SK-N-SH (cell line): ENCODE measurements at regions of chr14 and their contacts with region 1.

Region 1: DNA sequence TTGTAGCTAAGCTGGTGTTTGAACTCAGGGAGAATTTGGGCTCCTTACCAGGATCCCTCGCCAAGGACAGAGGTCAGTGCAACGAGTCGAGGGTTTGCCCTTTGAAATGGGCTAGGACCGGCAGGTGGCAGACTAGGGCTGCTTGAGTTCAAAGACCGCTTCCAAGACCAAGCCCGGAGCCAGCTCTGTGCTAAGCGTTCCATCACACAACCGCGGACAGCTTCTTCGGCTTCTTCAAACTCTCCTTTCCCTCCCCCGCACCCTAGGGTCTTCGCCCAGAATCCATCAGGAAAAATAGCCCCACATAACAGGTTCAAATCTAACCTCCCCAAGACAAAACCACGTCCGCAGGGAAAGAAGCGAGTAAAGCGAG is 705 bp upstream of the FLVCR2 start:
- DNase-seq: peak; percentile 87
- H3K4me3 ChIP-seq: peak overlapping the region; percentile 57 to 82
- H3K27ac ChIP-seq: no peak overlapping the region
- H3K4me1 ChIP-seq: peaks cover 0 to 11% of the 10 kb centered on the region in 2 experiments; a peak in 1 of 4 replicates
- H3K27me3 ChIP-seq: peaks cover 35% of the 10 kb centered on the region
- CTCF ChIP-seq: peak; percentile 77
- EP300 ChIP-seq: no peak
- RAD21 ChIP-seq: peak; percentile 89

Region 2: GRCh38 chr14:75147423-75148071 is 430.2 kb before region 1 on chr14:
- CTCF ChIA-PET with region 1: no interaction called
- POLR2A ChIA-PET with region 1: no interaction called
- DNase-seq: no peak
- H3K4me3 ChIP-seq: no peak overlapping the region
- H3K27ac ChIP-seq: peak overlapping the region in 1 of 2 experiments; percentile 18; a peak in 1 of 4 replicates
- H3K4me1 ChIP-seq: no peaks in the 10 kb centered on the region; a peak in 1 of 4 replicates
- H3K27me3 ChIP-seq: no peaks in the 10 kb centered on the region
- CTCF ChIP-seq: no peak
- EP300 ChIP-seq: no peak
- RAD21 ChIP-seq: no peak

Region 3: GRCh38 chr14:75522224-75522982 is 55.3 kb before region 1 on chr14 and contains the start of gene BATF:
- CTCF ChIA-PET with region 1: interaction called, 13 read pairs
- POLR2A ChIA-PET with region 1: no interaction called
- DNase-seq: no peak
- H3K4me3 ChIP-seq: no peak within 1 kb of the TSS
- H3K27ac ChIP-seq: no peak within 1 kb of the TSS
- H3K4me1 ChIP-seq: no peaks in the 10 kb centered on the region
- H3K27me3 ChIP-seq: no peaks in the 10 kb centered on the region
- CTCF ChIP-seq: no peak
- EP300 ChIP-seq: no peak
- RAD21 ChIP-seq: no peak
- polyA plus RNA-seq, gene BATF: not detected in 2 replicates

Region 4: DNA sequence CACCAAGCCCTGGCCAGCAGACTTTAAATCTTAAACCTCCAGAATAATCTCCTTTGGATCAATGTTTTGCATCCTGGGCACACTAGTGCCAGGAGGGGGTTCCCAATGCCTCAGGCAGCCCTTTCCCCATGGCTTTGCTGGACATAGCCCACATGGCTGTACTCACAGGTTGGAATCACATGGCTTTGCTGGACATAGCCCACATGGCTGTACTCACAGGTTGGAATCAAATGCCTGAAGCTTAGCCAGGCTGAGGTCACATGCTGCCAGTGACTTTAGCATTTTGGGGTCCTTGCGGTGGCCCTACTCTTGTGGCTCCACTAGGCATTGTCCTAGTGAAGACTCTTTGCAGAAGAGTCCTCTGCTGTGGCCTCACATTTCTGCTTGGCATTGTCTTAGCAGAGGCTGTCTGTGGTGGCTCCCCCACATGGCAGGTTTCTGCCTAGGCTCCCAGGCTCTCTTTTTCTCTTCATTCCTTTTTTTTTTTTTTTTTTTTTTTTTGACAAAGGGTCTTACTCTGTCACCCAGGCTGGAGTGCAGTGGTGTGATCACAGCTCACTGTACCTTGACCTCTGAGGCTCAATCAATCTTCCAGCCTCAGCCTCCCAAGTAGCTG is 13.7 kb after region 1 on chr14:
- CTCF ChIA-PET with region 1: interaction called, 42 read pairs
- POLR2A ChIA-PET with region 1: no interaction called
- DNase-seq: no peak
- H3K4me3 ChIP-seq: no peak overlapping the region
- H3K27ac ChIP-seq: no peak overlapping the region
- H3K4me1 ChIP-seq: no peaks in the 10 kb centered on the region
- H3K27me3 ChIP-seq: no peaks in the 10 kb centered on the region; the same call in 1 of the 2 replicates
- CTCF ChIP-seq: no peak
- EP300 ChIP-seq: no peak
- RAD21 ChIP-seq: no peak

Region 5: DNA sequence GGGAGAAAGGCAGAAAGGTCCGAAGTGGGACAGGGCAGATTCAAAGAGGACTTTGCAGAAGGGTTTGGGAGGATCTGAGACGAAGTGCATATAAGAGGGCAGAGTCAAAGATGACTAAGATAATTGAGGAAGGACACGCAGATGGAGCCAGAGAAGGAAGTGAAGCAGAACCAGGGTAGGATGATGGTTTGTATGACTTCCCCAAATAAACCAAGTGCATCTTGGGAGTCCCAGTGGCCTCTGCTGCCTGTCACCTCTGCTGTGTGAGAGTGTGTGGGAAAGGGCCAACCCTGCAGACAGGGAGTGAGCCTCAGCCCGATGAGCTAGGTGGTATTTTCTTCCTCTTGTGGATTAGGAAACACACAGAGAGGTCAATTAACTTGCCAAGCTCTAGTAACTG is 37.5 kb after region 1 on chr14:
- CTCF ChIA-PET with region 1: interaction called, 19 read pairs
- POLR2A ChIA-PET with region 1: no interaction called
- DNase-seq: no peak
- H3K4me3 ChIP-seq: no peak overlapping the region
- H3K27ac ChIP-seq: no peak overlapping the region
- H3K4me1 ChIP-seq: no peaks in the 10 kb centered on the region
- H3K27me3 ChIP-seq: peaks cover 33% of the 10 kb centered on the region
- CTCF ChIP-seq: no peak
- EP300 ChIP-seq: no peak
- RAD21 ChIP-seq: no peak

Region 6: DNA sequence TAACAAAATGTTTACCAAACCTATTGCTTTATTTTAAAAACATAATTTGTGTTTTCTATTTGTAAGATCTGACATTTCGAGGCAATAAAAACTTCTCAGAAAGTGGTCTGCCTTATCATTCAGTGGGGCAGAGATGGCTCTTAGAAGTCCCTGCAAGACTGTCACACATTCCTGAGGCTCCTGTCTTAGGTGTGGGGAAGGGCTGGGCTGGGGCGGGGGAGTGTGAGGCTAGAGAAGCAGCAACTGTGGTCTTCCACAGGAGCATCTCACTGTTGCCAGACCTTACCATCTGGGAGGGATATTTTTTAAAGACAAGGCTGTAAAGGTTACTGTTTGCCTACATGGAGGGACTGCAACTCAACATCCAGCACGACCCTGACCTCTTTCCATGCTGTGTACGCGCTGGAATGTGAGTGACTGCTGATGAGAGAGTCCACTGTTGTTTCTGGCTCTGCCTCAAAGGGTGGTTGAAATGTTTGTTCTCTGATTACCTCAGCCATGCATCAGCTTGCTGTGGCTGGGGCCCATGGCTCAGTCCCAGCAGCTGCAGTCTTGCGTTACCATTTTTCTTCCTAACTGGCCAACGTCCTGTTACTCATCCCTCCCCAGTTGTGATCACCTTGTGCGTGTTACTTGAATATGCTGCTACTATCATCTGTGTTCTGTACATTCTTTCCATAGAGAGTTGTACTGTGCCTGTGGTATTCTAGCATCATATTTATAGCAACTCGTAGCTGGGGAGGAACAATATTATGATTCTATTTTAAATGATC is 70.5 kb after region 1 on chr14:
- CTCF ChIA-PET with region 1: interaction called, 439 read pairs
- POLR2A ChIA-PET with region 1: no interaction called
- DNase-seq: no peak
- H3K4me3 ChIP-seq: no peak overlapping the region
- H3K27ac ChIP-seq: no peak overlapping the region
- H3K4me1 ChIP-seq: no peaks in the 10 kb centered on the region
- H3K27me3 ChIP-seq: no peaks in the 10 kb centered on the region
- CTCF ChIP-seq: no peak
- EP300 ChIP-seq: no peak
- RAD21 ChIP-seq: no peak

Region 7: DNA sequence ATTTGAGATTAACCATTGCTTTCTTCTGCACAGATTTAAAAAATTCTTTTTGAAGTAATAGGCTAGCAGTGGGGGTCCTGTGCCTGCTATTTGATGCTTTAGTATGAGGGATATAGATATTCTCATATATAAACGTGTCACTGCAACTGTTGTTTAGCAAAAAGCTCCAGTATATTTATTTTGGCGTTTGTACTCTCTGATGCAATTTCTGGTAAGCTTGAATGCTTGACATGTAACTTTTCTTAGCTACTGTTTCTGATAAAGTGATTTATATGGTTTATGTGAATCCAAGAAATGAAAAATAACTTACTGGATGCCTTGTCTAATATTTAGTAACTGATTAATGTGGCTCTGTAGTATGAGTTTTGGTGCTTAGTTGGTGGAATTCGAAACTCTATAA is 160.5 kb after region 1 on chr14:
- CTCF ChIA-PET with region 1: no interaction called
- POLR2A ChIA-PET with region 1: no interaction called
- DNase-seq: no peak
- H3K4me3 ChIP-seq: no peak overlapping the region
- H3K27ac ChIP-seq: no peak overlapping the region
- H3K4me1 ChIP-seq: no peaks in the 10 kb centered on the region; a peak in 1 of 4 replicates
- H3K27me3 ChIP-seq: no peaks in the 10 kb centered on the region
- CTCF ChIP-seq: no peak
- EP300 ChIP-seq: no peak
- RAD21 ChIP-seq: no peak

Region 8: GRCh38 chr14:75906676-75907280 is 329.1 kb after region 1 on chr14:
- CTCF ChIA-PET with region 1: interaction called, 11 read pairs
- POLR2A ChIA-PET with region 1: no interaction called
- DNase-seq: peak; percentile 39
- H3K4me3 ChIP-seq: no peak overlapping the region
- H3K27ac ChIP-seq: no peak overlapping the region
- H3K4me1 ChIP-seq: peaks cover 9 to 13% of the 10 kb centered on the region in 2 experiments; a peak in 3 of 4 replicates
- H3K27me3 ChIP-seq: no peaks in the 10 kb centered on the region
- CTCF ChIP-seq: peak; percentile 98
- EP300 ChIP-seq: no peak
- RAD21 ChIP-seq: peak; percentile 87